ENCODE measurements at regions of chr12 and their contacts with region 1.

Region 1: GRCh38 chr12:123905319-123905925 is 67.2 kb downstream of the CCDC92 start:
- H3K4me3 ChIP-seq: no peak overlapping the region
- H3K27ac ChIP-seq: no peak overlapping the region
- H3K4me1 ChIP-seq: no peaks in the 10 kb centered on the region
- CTCF ChIP-seq: no peak

Region 2: DNA sequence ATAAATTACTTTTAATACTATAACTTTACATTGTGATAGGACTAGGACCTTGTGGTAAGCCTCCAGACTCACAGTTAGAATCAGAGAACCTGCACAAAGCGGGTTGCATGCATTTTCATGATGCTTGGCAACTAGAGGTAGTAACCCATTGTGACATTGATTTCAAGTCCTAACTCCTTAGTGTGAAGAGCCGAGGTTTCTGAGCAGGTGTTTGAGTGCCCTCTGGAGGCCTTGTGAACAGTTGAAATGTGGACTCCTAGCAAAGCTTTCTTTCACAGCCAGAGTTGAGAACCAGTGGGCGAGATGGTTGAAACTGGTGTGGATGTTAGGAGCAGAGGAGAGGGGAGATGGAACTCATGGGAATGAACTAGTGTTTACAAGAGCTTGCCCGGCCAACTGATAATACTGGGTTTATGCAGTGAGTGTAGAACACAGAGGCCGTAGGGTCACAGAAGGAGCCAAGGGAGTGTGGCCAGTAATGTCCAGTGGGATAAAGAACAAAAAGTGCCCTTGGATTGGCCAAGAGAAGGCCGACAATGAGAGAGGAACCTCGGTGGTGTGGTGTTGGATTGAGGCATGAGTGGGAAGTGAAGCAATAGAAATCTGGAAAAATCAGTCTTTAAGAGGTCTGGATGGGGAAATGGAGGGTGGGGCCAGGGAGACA is 78.5 kb after region 1 on chr12:
- CTCF ChIA-PET with region 1: interaction called, 19 read pairs
- POLR2A ChIA-PET with region 1: no interaction called
- H3K4me3 ChIP-seq: no peak overlapping the region
- H3K27ac ChIP-seq: no peak overlapping the region
- H3K4me1 ChIP-seq: peaks cover 4% of the 10 kb centered on the region; the same call in 1 of the 2 replicates
- CTCF ChIP-seq: peak; percentile 47; the same call in 1 of the 2 replicates

Measured in HEK293 (cell line).